ENCODE measurements at regions of chr9 and their contacts with region 1.

Region 1: GRCh38 chr9:132354637-132355355 is at the start of gene SETX:
- DNase-seq: peak; percentile 96 to 98 (median 97)
- H3K4me3 ChIP-seq: peak within 1 kb of the TSS; percentile 62 to 95 (median 86)
- H3K27ac ChIP-seq: peak within 1 kb of the TSS; percentile 90 to 97
- H3K4me1 ChIP-seq: peaks cover 24 to 51% (median 43%) of the 10 kb centered on the region in 4 experiments
- H3K27me3 ChIP-seq: no peaks in the 10 kb centered on the region

Region 2: DNA sequence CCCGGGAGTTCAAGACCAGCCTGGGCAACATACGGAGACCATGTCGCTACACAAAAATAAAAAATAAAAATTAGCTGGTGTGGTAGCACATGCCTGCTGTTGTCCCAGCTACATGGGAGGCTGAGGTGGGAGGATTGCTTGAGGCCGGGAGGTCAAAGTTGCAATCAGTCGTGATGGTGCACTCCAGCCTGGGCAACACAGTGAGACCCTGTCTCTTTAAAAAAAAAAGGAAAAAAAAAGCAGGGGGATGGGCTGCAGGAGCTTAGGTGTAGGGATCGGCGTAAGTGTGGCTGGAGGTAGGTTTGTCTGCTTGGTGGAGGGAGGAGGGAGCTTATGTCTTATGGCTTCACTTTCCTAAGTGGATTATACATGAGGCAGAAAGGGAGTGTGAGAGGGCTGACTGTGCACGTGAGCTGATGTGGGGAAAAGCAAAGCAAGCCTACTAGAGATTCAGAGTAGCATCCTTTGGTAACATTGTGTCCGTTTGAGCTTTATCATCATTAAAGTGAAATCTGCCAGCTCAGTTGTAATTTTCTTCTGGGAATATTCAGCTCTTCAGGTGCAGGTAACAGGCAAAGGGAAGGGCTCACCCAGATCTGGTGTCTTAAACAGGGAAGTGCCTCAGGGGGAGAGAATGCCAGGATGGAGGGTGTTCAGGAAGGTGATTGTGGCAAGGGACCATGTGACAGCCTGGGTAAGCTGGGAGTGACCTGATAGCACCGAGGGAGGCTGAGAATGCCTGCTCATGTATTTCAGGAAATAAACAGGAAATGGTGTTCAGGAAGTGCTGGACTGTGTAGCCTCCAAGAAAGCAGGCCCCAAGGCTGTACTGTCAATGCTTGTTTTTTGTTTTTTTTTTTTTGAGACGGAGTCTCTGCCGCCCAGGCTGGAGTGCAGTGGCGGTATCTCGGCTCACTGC is 17.6 kb after region 1 on chr9:
- CTCF ChIA-PET with region 1: interaction called, 16 read pairs
- POLR2A ChIA-PET with region 1: interaction called, 26 read pairs
- DNase-seq: peak; percentile 92 to 98 (median 97)
- H3K4me3 ChIP-seq: peak overlapping the region in 4 of 7 experiments; percentile 25 to 58 (median 38)
- H3K27ac ChIP-seq: peak overlapping the region; percentile 62 to 69
- H3K4me1 ChIP-seq: peaks cover 9 to 47% (median 36%) of the 10 kb centered on the region in 4 experiments
- H3K27me3 ChIP-seq: no peaks in the 10 kb centered on the region

Region 3: GRCh38 chr9:132381966-132382541 is 27.3 kb after region 1 on chr9:
- CTCF ChIA-PET with region 1: interaction called, 11 read pairs
- POLR2A ChIA-PET with region 1: interaction called, 45 read pairs
- DNase-seq: peak; percentile 30 to 77 (median 64)
- H3K4me3 ChIP-seq: peak overlapping the region in 3 of 7 experiments; percentile 15 to 53 (median 20)
- H3K27ac ChIP-seq: peak overlapping the region; percentile 65 to 77
- H3K4me1 ChIP-seq: peaks cover 18 to 37% (median 29%) of the 10 kb centered on the region in 4 experiments
- H3K27me3 ChIP-seq: no peaks in the 10 kb centered on the region

Region 4: DNA sequence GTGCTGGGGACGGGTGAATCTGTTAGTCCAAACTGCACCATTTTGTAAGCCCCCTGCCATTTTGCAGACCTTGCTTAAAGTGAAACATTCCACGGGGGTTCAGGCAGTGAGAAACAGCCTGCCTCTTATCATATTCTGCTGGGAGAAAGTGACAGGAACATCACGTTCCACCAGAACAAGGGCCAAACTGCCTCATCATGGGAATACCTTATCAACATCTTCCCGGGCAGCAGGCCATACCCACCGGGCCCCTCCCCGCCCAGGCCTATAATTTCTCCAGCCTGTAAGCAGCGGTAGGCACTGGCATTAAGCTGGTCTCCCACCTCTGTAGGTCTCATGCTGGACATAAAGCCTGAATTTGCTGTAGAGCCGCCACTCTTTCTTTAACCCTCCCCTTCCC is 53.7 kb after region 1 on chr9:
- CTCF ChIA-PET with region 1: no interaction called
- POLR2A ChIA-PET with region 1: no interaction called
- DNase-seq: no peak
- H3K4me3 ChIP-seq: no peak overlapping the region
- H3K27ac ChIP-seq: no peak overlapping the region
- H3K4me1 ChIP-seq: peaks cover 16 to 55% (median 49%) of the 10 kb centered on the region in 4 experiments
- H3K27me3 ChIP-seq: peaks cover 6 to 44% (median 17%) of the 10 kb centered on the region in 5 experiments